Gastrocnemius medialis (tissue), 4 donors: ENCODE measurements at regions of chr3 and their contacts with region 1.

Region 1: GRCh38 chr3:33096093-33096868 is 665 bp downstream of the GLB1 start:
- DNase-seq: peak in 1 of 2 donors; percentile 25
- ATAC-seq: peak; percentile 51 to 59
- H3K4me3 ChIP-seq: peak overlapping the region; percentile 72 to 100 (median 94)
- H3K27ac ChIP-seq: peak overlapping the region; percentile 81 to 99 (median 97)
- H3K4me1 ChIP-seq: peaks cover 12 to 33% of the 10 kb centered on the region in 2 donors
- H3K27me3 ChIP-seq: no peaks in the 10 kb centered on the region
- CTCF ChIP-seq: no peak
- POLR2A ChIP-seq: no peak

Region 2: GRCh38 chr3:32969656-32970055 is 126.6 kb before region 1 on chr3:
- in situ Hi-C with region 1: no loop called
- intact Hi-C with region 1: no loop called
- DNase-seq: no peak
- ATAC-seq: no peak
- H3K4me3 ChIP-seq: no peak overlapping the region
- H3K27ac ChIP-seq: no peak overlapping the region
- H3K4me1 ChIP-seq: no peaks in the 10 kb centered on the region
- H3K27me3 ChIP-seq: no peaks in the 10 kb centered on the region
- CTCF ChIP-seq: no peak
- POLR2A ChIP-seq: no peak

Region 3: GRCh38 chr3:33113772-33114621 is 17.7 kb after region 1 on chr3 and contains the start of gene CRTAP:
- in situ Hi-C with region 1: no loop called
- intact Hi-C with region 1: loop called (anchors 1 kb)
- DNase-seq: peak; percentile 92 to 97
- ATAC-seq: peak; percentile 76 to 80
- H3K4me3 ChIP-seq: peak within 1 kb of the TSS; percentile 69 to 90 (median 70)
- H3K27ac ChIP-seq: peak within 1 kb of the TSS; percentile 87 to 96 (median 94)
- H3K4me1 ChIP-seq: peaks cover 9% of the 10 kb centered on the region in 2 donors
- H3K27me3 ChIP-seq: no peaks in the 10 kb centered on the region
- CTCF ChIP-seq: peak in 1 of 5 experiments; percentile 17
- POLR2A ChIP-seq: peak; percentile 38 to 48
- total RNA-seq, gene CRTAP: 75.2 to 107 (median 83.1) TPM